Activated CD4-positive, alpha-beta T cell treated with anti-CD3 and anti-CD28 coated beads for 36 hours (primary cell): ENCODE measurements at regions of chr20 and their contacts with region 1.

Region 1: DNA sequence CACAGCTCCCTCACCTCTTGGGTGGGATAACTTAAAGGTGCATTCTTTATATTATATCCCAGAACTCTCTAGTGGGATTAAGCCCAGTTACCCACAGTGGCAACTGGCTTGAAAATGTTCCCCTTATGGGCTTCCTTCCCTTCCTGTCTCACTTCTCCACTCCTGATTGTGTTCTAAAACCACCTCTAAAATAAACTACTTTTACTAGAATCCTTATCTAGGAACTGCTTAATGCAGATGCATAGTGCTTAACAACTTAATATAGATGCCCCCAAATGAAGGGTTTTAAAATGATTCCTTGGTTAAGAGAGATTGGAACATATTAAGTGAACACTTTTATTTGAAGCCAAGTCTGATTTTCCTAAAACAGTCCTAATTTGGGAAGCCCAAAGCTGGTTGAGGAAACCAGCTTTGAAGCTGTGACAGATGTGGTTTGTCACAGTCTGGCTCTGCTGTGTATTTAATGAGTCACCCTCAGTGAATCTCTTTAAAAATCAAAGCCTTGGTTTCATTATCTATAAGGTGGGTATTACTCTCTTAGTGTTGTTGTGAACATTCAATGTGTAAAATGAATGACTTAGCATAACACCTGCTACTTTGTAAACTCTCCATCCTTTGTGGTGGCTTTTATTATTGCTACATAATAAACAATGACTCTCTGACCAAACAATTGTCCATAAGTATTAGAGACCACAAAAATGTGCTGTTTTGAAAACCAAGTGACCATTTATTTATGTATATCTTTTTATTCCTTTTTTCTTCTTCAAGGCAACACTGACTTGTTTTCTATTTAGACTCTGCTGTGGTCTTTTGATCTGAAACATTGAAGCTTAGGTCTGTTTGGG is 24.4 kb downstream of the PLCB1 start:
- DNase-seq: no peak
- ATAC-seq: peak; percentile 85
- H3K4me3 Mint-ChIP-seq: no peak overlapping the region
- H3K27ac Mint-ChIP-seq: no peak overlapping the region
- H3K4me1 Mint-ChIP-seq: peaks cover 48% of the 10 kb centered on the region
- H3K27me3 Mint-ChIP-seq: no peaks in the 10 kb centered on the region

Region 2: GRCh38 chr20:8271727-8272126 is 115.3 kb after region 1 on chr20:
- CTCF ChIA-PET with region 1: no interaction called
- POLR2A ChIA-PET with region 1: no interaction called
- intact Hi-C with region 1: loop called in 1 of 2 experiments (anchors 10 kb)
- DNase-seq: no peak
- ATAC-seq: peak; percentile 26
- H3K4me3 Mint-ChIP-seq: no peak overlapping the region
- H3K27ac Mint-ChIP-seq: no peak overlapping the region
- H3K4me1 Mint-ChIP-seq: peaks cover 23% of the 10 kb centered on the region
- H3K27me3 Mint-ChIP-seq: peaks cover 8% of the 10 kb centered on the region

Region 3: GRCh38 chr20:8361006-8361652 is 204.7 kb after region 1 on chr20:
- CTCF ChIA-PET with region 1: no interaction called
- POLR2A ChIA-PET with region 1: no interaction called
- intact Hi-C with region 1: no loop called
- DNase-seq: peak; percentile 51
- ATAC-seq: peak; percentile 90
- H3K4me3 Mint-ChIP-seq: no peak overlapping the region
- H3K27ac Mint-ChIP-seq: no peak overlapping the region
- H3K4me1 Mint-ChIP-seq: peaks cover 9% of the 10 kb centered on the region
- H3K27me3 Mint-ChIP-seq: no peaks in the 10 kb centered on the region